ENCODE measurements at regions of chr9 and their contacts with region 1.

Region 1: DNA sequence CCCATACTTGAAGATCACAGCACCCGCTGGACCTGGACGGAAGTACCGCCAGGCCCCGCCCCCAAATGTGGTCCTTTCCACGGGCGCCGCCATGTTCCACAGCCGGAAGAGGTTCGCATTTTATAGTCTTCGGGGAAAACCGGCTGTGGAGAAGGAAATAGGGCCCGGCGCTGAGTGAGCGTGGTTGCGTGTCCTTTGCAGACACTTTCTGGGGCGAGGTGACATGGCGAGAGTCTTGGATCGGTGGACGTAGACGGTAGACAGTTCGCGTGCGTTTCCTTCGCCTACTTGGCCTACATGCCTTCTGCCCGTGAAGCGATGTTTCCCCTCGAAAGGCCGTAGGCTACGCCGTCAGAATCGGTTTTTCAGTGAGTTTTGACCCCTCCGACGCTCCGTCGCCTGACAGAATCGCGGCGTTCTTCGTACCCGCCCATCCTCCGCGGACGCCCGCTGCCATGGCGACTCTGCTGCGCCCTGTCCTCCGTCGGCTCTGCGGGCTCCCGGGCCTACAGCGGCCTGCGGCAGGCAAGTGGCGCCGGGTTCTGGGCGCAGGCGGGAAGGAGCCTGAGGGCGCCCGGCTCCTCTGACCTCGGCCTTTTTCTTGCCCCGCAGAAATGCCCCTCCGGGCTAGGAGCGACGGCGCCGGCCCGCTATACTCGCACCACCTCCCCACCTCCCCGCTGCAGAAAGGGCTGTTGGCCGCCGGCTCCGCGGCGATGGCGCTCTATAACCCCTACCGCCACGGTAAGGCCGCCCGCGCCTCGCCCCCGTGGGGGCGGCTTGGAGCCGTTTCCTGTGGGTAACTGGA is at the starts of genes COQ4 and TRUB2:
- DNase-seq: peak; percentile 94
- ATAC-seq: peak; percentile 98
- total RNA-seq, gene COQ4: 21.2 to 27.7 TPM
- total RNA-seq, gene TRUB2: 23.0 to 26.6 TPM

Region 2: GRCh38 chr9:128275996-128276573 is 46.5 kb before region 1 on chr9 and contains the starts of genes GOLGA2 and SWI5:
- intact Hi-C with region 1: loop called in 1 of 2 experiments (anchors 5 kb)
- DNase-seq: peak; percentile 100
- ATAC-seq: peak; percentile 95 to 98
- total RNA-seq, gene GOLGA2: 85.6 to 113 TPM
- total RNA-seq, gene SWI5: 17.2 to 18.4 TPM